Endothelial cell of umbilical vein (primary cell): ENCODE measurements at regions of chr13 and their contacts with region 1.

Region 1: GRCh38 chr13:22357132-22357531 is 686.3 kb downstream of the FGF9 start:
- DNase-seq: no peak
- H3K4me3 ChIP-seq: no peak overlapping the region
- H3K27ac ChIP-seq: no peak overlapping the region
- H3K4me1 ChIP-seq: no peaks in the 10 kb centered on the region
- H3K27me3 ChIP-seq: no peaks in the 10 kb centered on the region
- CTCF ChIP-seq: no peak
- POLR2A ChIP-seq: no peak

Region 2: GRCh38 chr13:22031702-22032286 is 325.3 kb before region 1 on chr13:
- CTCF ChIA-PET with region 1: no interaction called
- POLR2A ChIA-PET with region 1: no interaction called
- dilution Hi-C with region 1: no loop called
- intact Hi-C with region 1: no loop called
- DNase-seq: no peak
- H3K4me3 ChIP-seq: no peak overlapping the region
- H3K27ac ChIP-seq: no peak overlapping the region
- H3K4me1 ChIP-seq: no peaks in the 10 kb centered on the region
- H3K27me3 ChIP-seq: no peaks in the 10 kb centered on the region
- CTCF ChIP-seq: no peak
- POLR2A ChIP-seq: no peak

Region 3: GRCh38 chr13:22336460-22336859 is 20.7 kb before region 1 on chr13:
- CTCF ChIA-PET with region 1: no interaction called
- POLR2A ChIA-PET with region 1: no interaction called
- dilution Hi-C with region 1: no loop called
- intact Hi-C with region 1: no loop called
- DNase-seq: no peak
- H3K4me3 ChIP-seq: no peak overlapping the region
- H3K27ac ChIP-seq: no peak overlapping the region
- H3K4me1 ChIP-seq: no peaks in the 10 kb centered on the region
- H3K27me3 ChIP-seq: no peaks in the 10 kb centered on the region
- CTCF ChIP-seq: no peak
- POLR2A ChIP-seq: no peak

Region 4: GRCh38 chr13:22399801-22400420 is 42.8 kb after region 1 on chr13:
- CTCF ChIA-PET with region 1: no interaction called
- POLR2A ChIA-PET with region 1: no interaction called
- dilution Hi-C with region 1: no loop called
- intact Hi-C with region 1: no loop called
- DNase-seq: no peak
- H3K4me3 ChIP-seq: no peak overlapping the region
- H3K27ac ChIP-seq: no peak overlapping the region
- H3K4me1 ChIP-seq: no peaks in the 10 kb centered on the region
- H3K27me3 ChIP-seq: no peaks in the 10 kb centered on the region
- CTCF ChIP-seq: no peak
- POLR2A ChIP-seq: no peak

Region 5: GRCh38 chr13:22629374-22629773 is 272.2 kb after region 1 on chr13:
- CTCF ChIA-PET with region 1: no interaction called
- POLR2A ChIA-PET with region 1: no interaction called
- dilution Hi-C with region 1: no loop called
- intact Hi-C with region 1: loop called (anchors 5 kb)
- DNase-seq: no peak
- H3K4me3 ChIP-seq: no peak overlapping the region
- H3K27ac ChIP-seq: no peak overlapping the region
- H3K4me1 ChIP-seq: no peaks in the 10 kb centered on the region
- H3K27me3 ChIP-seq: no peaks in the 10 kb centered on the region
- CTCF ChIP-seq: no peak
- POLR2A ChIP-seq: no peak